ENCODE measurements at regions of chr4 and their contacts with region 1.

Region 1: DNA sequence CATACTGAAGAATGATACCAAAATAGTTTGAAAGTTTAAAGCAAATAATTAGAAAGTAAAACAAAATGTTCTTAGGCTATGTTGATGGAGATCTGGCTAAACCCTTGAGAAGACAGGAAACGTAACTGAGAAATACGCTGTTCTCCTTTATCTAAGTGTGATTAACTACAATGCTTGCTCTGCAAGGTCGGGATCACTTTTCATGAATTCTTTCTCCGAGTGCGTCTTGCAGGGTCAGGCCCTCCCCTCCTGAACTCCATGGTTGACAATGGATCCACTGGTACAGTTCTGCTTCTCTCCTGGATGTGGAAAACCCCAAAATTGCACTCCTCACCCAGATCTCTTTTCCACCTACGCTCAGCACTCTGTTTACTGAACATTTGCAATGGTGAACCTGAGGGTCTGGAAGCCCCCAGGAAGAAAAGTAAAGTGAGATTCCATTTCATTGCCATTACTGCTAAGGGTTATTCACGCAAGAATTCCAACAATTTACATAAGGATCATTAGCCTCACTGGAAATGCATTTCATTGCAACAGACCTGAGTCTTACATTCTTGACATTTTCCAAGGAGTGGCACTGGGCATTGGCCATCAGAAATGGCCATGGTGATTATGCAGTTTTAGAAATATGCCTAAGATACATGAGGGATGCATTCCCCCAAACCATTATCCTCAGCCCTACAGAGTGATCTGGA is 24.6 kb upstream of the WWC2 start:
- DNase-seq: no peak
- H3K4me3 ChIP-seq: no peak overlapping the region
- H3K27me3 ChIP-seq: no peaks in the 10 kb centered on the region
- CTCF ChIP-seq: no peak

Region 2: GRCh38 chr4:183186803-183187202 is 112.4 kb after region 1 on chr4:
- CTCF ChIA-PET with region 1: no interaction called
- POLR2A ChIA-PET with region 1: no interaction called
- DNase-seq: no peak
- H3K4me3 ChIP-seq: no peak overlapping the region
- H3K27me3 ChIP-seq: no peaks in the 10 kb centered on the region
- CTCF ChIP-seq: no peak

Region 3: DNA sequence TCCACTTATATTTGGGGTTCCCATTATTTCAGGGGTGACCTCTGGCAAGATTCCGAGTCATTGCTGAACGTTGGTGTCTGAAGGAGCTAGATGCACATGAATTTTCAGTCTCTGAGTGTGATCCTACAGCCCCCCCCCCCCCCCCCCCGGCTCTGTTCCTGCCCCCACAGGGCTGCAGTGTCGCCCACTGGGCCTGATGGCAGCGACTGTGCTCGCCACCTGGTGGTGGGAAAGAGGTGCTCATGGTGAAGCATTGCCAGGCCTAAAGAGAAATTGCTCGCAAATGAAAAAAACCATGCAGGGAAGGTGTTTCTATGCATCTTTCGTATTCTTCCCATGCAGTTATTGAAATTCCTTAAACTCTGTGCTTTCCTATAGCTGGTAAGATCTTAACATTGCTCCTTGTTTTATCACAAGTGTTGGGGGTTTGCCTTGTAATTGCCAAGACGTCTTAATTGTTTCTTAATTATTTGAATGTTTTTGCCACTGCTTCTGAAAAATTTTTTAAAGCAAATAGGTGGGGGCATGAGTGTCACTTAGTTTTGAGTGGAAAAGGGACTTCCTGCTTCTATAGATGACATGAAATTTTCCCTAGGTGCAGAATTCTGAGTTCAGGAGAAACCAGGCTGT is 182.4 kb after region 1 on chr4:
- CTCF ChIA-PET with region 1: interaction called, 183 read pairs
- POLR2A ChIA-PET with region 1: no interaction called
- DNase-seq: no peak
- H3K4me3 ChIP-seq: no peak overlapping the region
- H3K27me3 ChIP-seq: no peaks in the 10 kb centered on the region
- CTCF ChIP-seq: peak; percentile 88